ENCODE measurements at regions of chr12 and their contacts with region 1.

Region 1: GRCh38 chr12:97716356-97716755 is 253.8 kb downstream of the RMST start:
- DNase-seq: no peak
- H3K4me3 ChIP-seq: no peak overlapping the region
- H3K27ac ChIP-seq: no peak overlapping the region
- H3K4me1 ChIP-seq: no peaks in the 10 kb centered on the region
- H3K27me3 ChIP-seq: no peaks in the 10 kb centered on the region
- CTCF ChIP-seq: peak in 3 of 4 experiments; percentile 28 to 46 (median 36)
- POLR2A ChIP-seq: no peak

Region 2: DNA sequence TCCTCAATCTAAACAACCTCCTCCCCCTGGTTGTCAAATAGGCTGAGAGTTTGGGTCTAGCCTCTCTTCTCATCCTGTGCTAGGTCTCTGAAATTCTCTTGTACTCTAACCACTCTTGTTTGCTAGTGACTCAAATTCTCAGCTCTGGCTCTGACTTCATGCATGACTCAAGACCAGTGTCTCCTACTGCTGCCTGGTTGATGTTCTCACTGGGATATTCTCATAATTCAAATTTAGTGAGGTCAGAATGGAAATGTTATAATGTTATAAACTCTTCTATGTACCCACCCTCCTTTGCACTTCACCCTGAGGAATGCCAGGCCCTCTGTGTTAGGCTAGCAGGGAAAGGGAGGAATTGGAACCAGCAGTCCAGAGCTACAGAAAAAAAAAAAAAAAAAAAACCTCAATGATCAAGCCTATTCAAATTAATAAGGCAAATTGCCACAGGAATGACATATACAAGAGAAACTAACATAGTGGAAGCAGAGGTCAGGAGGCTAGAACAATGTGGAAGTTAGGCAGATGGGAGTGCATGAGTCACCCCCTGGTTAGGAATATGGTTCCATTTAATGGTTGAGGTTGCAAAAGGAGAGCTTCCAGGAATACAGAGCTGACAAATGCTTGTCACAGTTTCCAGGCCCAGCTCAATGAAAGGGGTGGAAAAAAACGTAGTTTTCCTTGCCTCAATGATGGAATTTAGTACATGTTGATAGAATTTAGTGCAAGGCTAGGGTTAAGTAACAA is 205.8 kb after region 1 on chr12:
- intact Hi-C with region 1: no loop called
- DNase-seq: no peak
- H3K4me3 ChIP-seq: no peak overlapping the region
- H3K27ac ChIP-seq: no peak overlapping the region
- H3K4me1 ChIP-seq: no peaks in the 10 kb centered on the region
- H3K27me3 ChIP-seq: no peaks in the 10 kb centered on the region
- CTCF ChIP-seq: no peak
- POLR2A ChIP-seq: no peak

Region 3: DNA sequence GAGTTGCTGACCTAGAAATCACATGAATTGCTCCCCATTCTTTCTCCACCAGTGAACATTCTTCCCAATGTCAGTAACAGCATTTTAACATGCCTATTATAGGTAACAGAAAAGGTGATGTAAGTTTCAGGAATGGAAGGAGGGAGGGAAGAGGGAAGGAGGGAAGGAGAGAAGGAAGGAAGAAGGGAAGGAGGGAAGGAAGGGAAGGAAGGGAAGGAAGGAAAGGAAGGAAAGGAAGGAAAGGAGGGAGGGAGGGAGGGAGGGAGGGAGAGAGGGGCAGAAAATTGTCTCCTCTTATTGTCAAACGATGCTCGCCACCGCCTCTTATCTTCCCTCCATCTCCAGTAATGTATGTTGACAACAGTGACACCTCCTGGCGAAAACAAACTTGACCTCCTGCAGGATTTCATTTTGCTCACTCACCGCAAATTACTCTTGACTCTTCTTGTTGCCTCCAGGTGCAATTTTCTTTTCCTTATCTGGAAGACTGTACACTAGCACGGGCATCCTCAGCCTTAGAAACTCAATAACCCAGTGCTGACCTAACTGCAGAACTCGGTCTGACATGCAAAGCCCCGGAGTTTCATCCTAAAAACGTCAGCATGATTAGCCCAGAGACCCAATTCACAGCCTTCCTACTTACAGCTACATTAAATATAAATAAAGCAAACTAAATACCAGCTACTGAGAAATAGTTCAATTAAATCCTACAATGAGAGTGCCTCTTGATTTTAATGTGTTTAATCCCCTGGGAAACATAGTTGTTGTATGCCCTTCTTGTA is 286.5 kb after region 1 on chr12:
- intact Hi-C with region 1: loop called (anchors 5 kb)
- DNase-seq: peak; percentile 46
- H3K4me3 ChIP-seq: no peak overlapping the region
- H3K27ac ChIP-seq: no peak overlapping the region
- H3K4me1 ChIP-seq: no peaks in the 10 kb centered on the region
- H3K27me3 ChIP-seq: no peaks in the 10 kb centered on the region
- CTCF ChIP-seq: peak; percentile 12 to 48 (median 46)
- POLR2A ChIP-seq: no peak